Lower leg skin (tissue), 4 donors: ENCODE measurements at regions of chr19 and their contacts with region 1.

Region 1: GRCh38 chr19:47713046-47714021 is at the start of gene EHD2:
- DNase-seq: peak; percentile 53 to 95
- H3K4me3 ChIP-seq: peak within 1 kb of the TSS; percentile 52
- CTCF ChIP-seq: peak in 1 of 3 donors; percentile 73
- POLR2A ChIP-seq: peak in 1 of 2 donors; percentile 56
- total RNA-seq, gene EHD2: 49.4 to 89.4 (median 66.0) TPM

Region 2: GRCh38 chr19:46878613-46879375 is 834.5 kb before region 1 on chr19:
- intact Hi-C with region 1: no loop called
- DNase-seq: no peak
- H3K4me3 ChIP-seq: no peak overlapping the region
- CTCF ChIP-seq: no peak
- POLR2A ChIP-seq: no peak

Region 3: GRCh38 chr19:47582320-47582909 is 130.9 kb before region 1 on chr19:
- intact Hi-C with region 1: no loop called
- DNase-seq: no peak
- H3K4me3 ChIP-seq: no peak overlapping the region
- CTCF ChIP-seq: no peak
- POLR2A ChIP-seq: no peak

Region 4: DNA sequence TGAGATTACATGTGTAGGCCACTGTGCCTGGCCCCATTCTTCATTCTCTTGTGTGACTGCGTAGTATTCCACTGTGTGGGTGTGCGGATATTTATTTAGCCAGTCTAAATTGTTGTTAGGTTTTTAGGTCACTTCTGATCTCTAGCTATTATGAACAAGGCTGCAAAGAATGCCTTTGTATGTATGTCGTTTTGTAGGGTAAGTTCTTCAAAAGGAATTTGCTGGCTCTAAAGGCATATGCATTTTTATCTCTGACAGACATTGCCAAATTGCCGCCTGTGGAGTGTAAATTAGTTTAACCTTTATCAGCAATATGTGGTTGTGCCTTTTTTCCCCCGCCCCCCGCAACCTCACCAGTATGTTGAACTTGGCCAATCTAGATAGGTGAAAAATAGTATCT is 30.4 kb before region 1 on chr19:
- intact Hi-C with region 1: no loop called
- DNase-seq: no peak
- H3K4me3 ChIP-seq: no peak overlapping the region
- CTCF ChIP-seq: no peak
- POLR2A ChIP-seq: no peak

Region 5: DNA sequence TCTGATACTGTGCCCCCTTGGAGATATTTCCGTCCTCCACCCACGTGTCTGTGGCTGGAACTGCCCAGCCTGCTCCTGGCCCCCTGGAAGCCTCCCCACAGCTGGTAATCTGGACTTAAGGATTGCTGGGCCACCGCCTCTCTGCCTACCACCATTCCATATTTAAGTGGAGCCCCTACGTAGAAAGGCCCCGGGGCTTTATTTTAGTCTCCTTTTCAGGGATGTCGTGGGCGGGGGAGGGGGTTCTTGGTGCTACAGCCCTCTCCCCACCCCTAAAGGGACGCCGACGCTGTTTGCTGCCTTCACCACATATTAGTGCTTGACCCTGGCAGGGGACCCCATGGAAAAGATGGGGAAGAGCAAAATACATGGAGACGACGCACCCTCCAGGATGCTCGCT is 29.3 kb after region 1 on chr19:
- intact Hi-C with region 1: loop called (anchors 2 kb)
- DNase-seq: no peak
- H3K4me3 ChIP-seq: no peak overlapping the region
- CTCF ChIP-seq: no peak
- POLR2A ChIP-seq: no peak

Region 6: GRCh38 chr19:47779524-47780214 is 66.3 kb after region 1 on chr19:
- intact Hi-C with region 1: loop called (anchors 10 kb)
- DNase-seq: peak; percentile 60 to 89
- H3K4me3 ChIP-seq: peak overlapping the region; percentile 98
- CTCF ChIP-seq: no peak
- POLR2A ChIP-seq: no peak